Activated CD4-positive, alpha-beta T cell treated with anti-CD3 and anti-CD28 coated beads for 36 hours (primary cell): ENCODE measurements at regions of chr5 and their contacts with region 1.

Region 1: DNA sequence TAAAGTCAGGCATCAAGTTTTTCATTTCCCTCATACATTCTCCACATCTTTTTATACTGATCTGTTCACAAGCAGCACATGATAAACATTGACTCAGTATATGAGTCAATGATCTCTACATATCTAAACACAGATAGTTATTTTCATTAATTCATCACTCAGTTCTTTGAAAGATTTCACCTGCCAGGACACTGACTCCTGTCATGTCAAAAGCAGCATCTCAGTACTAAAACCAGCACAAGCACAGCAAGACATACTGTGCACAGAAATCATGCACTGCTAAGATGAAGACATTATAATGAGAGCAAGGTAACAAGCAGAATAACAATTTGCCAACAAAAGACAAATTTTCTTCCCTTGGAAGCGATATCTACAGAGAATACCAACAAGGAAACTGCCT is 206.1 kb upstream of the COX7C start:
- DNase-seq: no peak
- ATAC-seq: no peak
- H3K4me3 Mint-ChIP-seq: no peak overlapping the region
- H3K27ac Mint-ChIP-seq: no peak overlapping the region
- H3K4me1 Mint-ChIP-seq: no peaks in the 10 kb centered on the region
- H3K27me3 Mint-ChIP-seq: no peaks in the 10 kb centered on the region

Region 2: GRCh38 chr5:85069659-85070640 is 1341.6 kb before region 1 on chr5:
- CTCF ChIA-PET with region 1: no interaction called
- POLR2A ChIA-PET with region 1: no interaction called
- intact Hi-C with region 1: no loop called
- DNase-seq: no peak
- ATAC-seq: no peak
- H3K4me3 Mint-ChIP-seq: no peak overlapping the region
- H3K27ac Mint-ChIP-seq: no peak overlapping the region
- H3K4me1 Mint-ChIP-seq: no peaks in the 10 kb centered on the region
- H3K27me3 Mint-ChIP-seq: no peaks in the 10 kb centered on the region

Region 3: DNA sequence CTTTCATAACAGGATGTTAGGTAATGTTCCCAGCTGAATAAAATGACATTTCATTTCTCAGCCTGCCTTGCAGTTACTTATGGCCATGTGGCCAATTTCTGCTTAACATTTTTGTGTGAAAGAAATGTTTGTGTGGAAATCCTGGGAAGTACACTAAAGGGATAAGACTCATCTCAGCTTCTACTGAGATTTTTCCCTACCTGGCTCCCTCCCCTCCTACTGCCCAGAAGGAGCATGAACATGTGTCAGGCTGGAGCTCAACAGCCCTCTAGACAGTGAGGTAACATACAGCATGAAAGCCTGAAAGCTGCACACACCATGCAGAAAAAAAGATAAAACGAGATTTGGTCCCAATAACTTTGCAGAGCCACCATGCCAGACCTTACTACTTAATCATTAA is 82.3 kb before region 1 on chr5:
- CTCF ChIA-PET with region 1: no interaction called
- POLR2A ChIA-PET with region 1: no interaction called
- intact Hi-C with region 1: no loop called
- DNase-seq: no peak
- ATAC-seq: no peak
- H3K4me3 Mint-ChIP-seq: no peak overlapping the region
- H3K27ac Mint-ChIP-seq: no peak overlapping the region
- H3K4me1 Mint-ChIP-seq: no peaks in the 10 kb centered on the region
- H3K27me3 Mint-ChIP-seq: no peaks in the 10 kb centered on the region

Region 4: GRCh38 chr5:87185838-87186237 is 774.2 kb after region 1 on chr5:
- CTCF ChIA-PET with region 1: no interaction called
- POLR2A ChIA-PET with region 1: no interaction called
- intact Hi-C with region 1: loop called in 1 of 2 experiments (anchors 5 kb)
- DNase-seq: no peak
- ATAC-seq: peak; percentile 57
- H3K4me3 Mint-ChIP-seq: no peak overlapping the region
- H3K27ac Mint-ChIP-seq: no peak overlapping the region
- H3K4me1 Mint-ChIP-seq: peaks cover 18% of the 10 kb centered on the region
- H3K27me3 Mint-ChIP-seq: no peaks in the 10 kb centered on the region